MCF 10A (cell line): ENCODE measurements at regions of chr1 and their contacts with region 1.

Region 1: GRCh38 chr1:244239261-244239770 is 188.2 kb downstream of the ZBTB18 start:
- DNase-seq: peak; percentile 95
- H3K4me3 Mint-ChIP-seq: no peak overlapping the region
- H3K27ac Mint-ChIP-seq: peak overlapping the region; percentile 91
- H3K4me1 Mint-ChIP-seq: peaks cover 7% of the 10 kb centered on the region
- H3K27me3 Mint-ChIP-seq: no peaks in the 10 kb centered on the region
- CTCF ChIP-seq: no peak

Region 2: DNA sequence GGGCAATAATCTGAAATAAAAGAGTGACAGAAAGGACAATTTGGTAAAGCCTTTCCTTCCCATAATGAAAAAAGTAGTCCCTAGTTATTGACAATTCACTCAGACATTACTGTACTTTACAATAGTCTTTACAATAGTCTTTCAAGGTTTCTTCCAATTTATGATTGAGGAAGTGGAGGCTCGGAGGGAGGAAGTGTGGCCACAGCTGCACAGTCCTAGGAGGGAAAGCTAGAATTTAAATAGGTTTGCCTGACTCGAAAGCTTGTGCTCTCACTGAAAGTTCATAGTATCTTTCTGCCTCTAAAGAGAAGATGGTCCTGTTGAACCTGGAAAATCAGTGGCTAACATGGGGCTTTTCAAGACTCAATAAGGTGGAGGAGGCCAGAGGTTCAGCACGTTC is 780.3 kb before region 1 on chr1:
- CTCF ChIA-PET with region 1: no interaction called
- POLR2A ChIA-PET with region 1: no interaction called
- intact Hi-C with region 1: no loop called
- DNase-seq: no peak
- H3K4me3 Mint-ChIP-seq: no peak overlapping the region
- H3K27ac Mint-ChIP-seq: no peak overlapping the region
- H3K4me1 Mint-ChIP-seq: no peaks in the 10 kb centered on the region
- H3K27me3 Mint-ChIP-seq: no peaks in the 10 kb centered on the region
- CTCF ChIP-seq: no peak

Region 3: GRCh38 chr1:244163861-244164562 is 75.3 kb before region 1 on chr1:
- CTCF ChIA-PET with region 1: no interaction called
- POLR2A ChIA-PET with region 1: interaction called, 5 read pairs
- intact Hi-C with region 1: loop called (anchors 5 kb)
- DNase-seq: peak; percentile 98
- H3K4me3 Mint-ChIP-seq: peak overlapping the region; percentile 60
- H3K27ac Mint-ChIP-seq: no peak overlapping the region
- H3K4me1 Mint-ChIP-seq: no peaks in the 10 kb centered on the region
- H3K27me3 Mint-ChIP-seq: no peaks in the 10 kb centered on the region
- CTCF ChIP-seq: no peak

Region 4: GRCh38 chr1:244214009-244214967 is 25.0 kb before region 1 on chr1:
- CTCF ChIA-PET with region 1: interaction called, 11 read pairs
- POLR2A ChIA-PET with region 1: interaction called, 5 read pairs
- intact Hi-C with region 1: no loop called
- DNase-seq: peak; percentile 97
- H3K4me3 Mint-ChIP-seq: no peak overlapping the region
- H3K27ac Mint-ChIP-seq: peak overlapping the region; percentile 38
- H3K4me1 Mint-ChIP-seq: peaks cover 15% of the 10 kb centered on the region
- H3K27me3 Mint-ChIP-seq: no peaks in the 10 kb centered on the region
- CTCF ChIP-seq: no peak

Region 5: GRCh38 chr1:244226435-244226834 is 12.9 kb before region 1 on chr1:
- CTCF ChIA-PET with region 1: interaction called, 13 read pairs
- POLR2A ChIA-PET with region 1: interaction called, 17 read pairs
- intact Hi-C with region 1: no loop called
- DNase-seq: peak; percentile 58
- H3K4me3 Mint-ChIP-seq: no peak overlapping the region
- H3K27ac Mint-ChIP-seq: no peak overlapping the region
- H3K4me1 Mint-ChIP-seq: peaks cover 24% of the 10 kb centered on the region
- H3K27me3 Mint-ChIP-seq: no peaks in the 10 kb centered on the region
- CTCF ChIP-seq: no peak

Region 6: GRCh38 chr1:244353551-244354091 is 114.3 kb after region 1 on chr1:
- CTCF ChIA-PET with region 1: no interaction called
- POLR2A ChIA-PET with region 1: no interaction called
- intact Hi-C with region 1: no loop called
- DNase-seq: peak; percentile 99
- H3K4me3 Mint-ChIP-seq: no peak overlapping the region
- H3K27ac Mint-ChIP-seq: peak overlapping the region; percentile 97
- H3K4me1 Mint-ChIP-seq: peaks cover 43% of the 10 kb centered on the region
- H3K27me3 Mint-ChIP-seq: no peaks in the 10 kb centered on the region
- CTCF ChIP-seq: no peak

Region 7: DNA sequence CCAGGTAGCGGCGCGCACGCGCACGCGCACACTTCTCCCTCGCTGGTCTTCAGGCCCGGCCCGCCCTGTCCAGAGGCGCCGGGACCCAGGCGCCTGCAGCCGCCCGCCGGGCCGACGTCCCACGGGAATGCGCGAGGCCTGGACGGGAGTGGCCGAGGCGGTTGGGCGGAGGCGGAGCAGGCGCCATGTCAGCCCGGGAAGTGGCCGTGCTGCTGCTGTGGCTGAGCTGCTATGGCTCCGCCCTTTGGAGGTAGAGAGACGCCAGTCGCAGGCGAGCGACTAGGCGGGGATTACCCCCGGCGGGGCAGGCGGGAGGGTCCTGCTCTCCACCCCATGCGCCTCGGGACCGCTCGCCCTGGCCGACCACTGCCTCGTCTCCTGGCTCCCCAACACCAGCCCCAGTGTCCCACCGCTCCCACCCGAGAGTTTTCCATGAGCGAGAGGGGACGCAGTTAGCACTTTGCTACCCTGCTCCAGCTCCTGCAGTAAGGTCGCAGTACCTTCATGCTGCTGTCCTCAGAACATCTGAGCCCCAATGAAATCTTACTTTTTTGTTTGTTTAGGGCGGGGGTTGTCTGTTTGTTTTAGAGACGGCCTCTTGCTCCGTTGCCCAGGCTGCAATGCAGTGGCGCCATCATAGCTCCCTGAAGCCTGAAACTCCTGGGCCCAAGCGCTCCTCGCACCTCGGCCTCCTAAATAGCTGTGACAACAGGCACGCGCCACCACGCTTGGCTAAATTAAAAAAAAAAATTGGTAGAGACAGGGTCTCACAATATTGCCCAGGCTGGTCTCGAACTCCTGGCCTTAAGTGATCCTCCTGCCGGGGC is 222.1 kb after region 1 on chr1 and contains the start of gene CATSPERE:
- CTCF ChIA-PET with region 1: no interaction called
- POLR2A ChIA-PET with region 1: no interaction called
- intact Hi-C with region 1: no loop called
- DNase-seq: peak; percentile 69
- H3K4me3 Mint-ChIP-seq: peak within 1 kb of the TSS; percentile 67
- H3K27ac Mint-ChIP-seq: peak within 1 kb of the TSS; percentile 64
- H3K4me1 Mint-ChIP-seq: peaks cover 10% of the 10 kb centered on the region
- H3K27me3 Mint-ChIP-seq: no peaks in the 10 kb centered on the region
- CTCF ChIP-seq: no peak
- total RNA-seq, gene CATSPERE: 1.2 and 2.1 TPM in 2 replicates